Naive thymus-derived CD4-positive, alpha-beta T cell (primary cell): ENCODE measurements at regions of chr14 and their contacts with region 1.

Region 1: GRCh38 chr14:92328648-92329255 is 5.8 kb downstream of the SLC24A4 start:
- DNase-seq: no peak
- ATAC-seq: no peak
- H3K4me3 ChIP-seq: no peak overlapping the region
- H3K4me3 Mint-ChIP-seq: no peak overlapping the region
- H3K27ac ChIP-seq: no peak overlapping the region
- H3K27ac Mint-ChIP-seq: no peak overlapping the region
- H3K4me1 ChIP-seq: no peaks in the 10 kb centered on the region
- H3K4me1 Mint-ChIP-seq: no peaks in the 10 kb centered on the region
- H3K27me3 ChIP-seq: no peaks in the 10 kb centered on the region
- H3K27me3 Mint-ChIP-seq: peaks cover 19 to 42% (median 28%) of the 10 kb centered on the region in 5 donors

Region 2: DNA sequence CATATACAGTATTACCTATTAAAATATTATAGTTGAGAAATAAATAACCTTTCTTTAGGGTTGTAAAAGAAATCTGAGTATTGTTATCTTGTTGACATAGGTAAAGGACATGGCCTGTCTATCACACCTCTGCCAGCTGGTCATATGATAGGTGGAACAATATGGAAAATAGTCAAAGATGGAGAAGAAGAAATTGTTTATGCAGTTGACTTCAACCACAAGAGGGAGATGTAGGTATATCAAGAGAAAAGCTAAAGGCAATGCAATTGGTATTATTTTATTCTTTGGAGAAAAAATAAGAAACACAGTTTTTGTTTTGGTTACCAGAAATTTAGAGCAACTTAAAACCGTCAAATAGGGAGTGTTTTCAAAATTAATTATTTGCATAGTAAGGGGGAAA is 193.5 kb before region 1 on chr14:
- CTCF ChIA-PET with region 1: no interaction called
- POLR2A ChIA-PET with region 1: no interaction called
- intact Hi-C with region 1: loop called in 1 of 2 experiments (anchors 2 kb)
- DNase-seq: peak in 5 of 9 donors; percentile 10 to 37 (median 27)
- ATAC-seq: no peak
- H3K4me3 ChIP-seq: no peak overlapping the region
- H3K4me3 Mint-ChIP-seq: no peak overlapping the region
- H3K27ac ChIP-seq: no peak overlapping the region
- H3K27ac Mint-ChIP-seq: no peak overlapping the region
- H3K4me1 ChIP-seq: no peaks in the 10 kb centered on the region
- H3K4me1 Mint-ChIP-seq: peaks cover 5 to 19% (median 14%) of the 10 kb centered on the region in 7 donors
- H3K27me3 ChIP-seq: no peaks in the 10 kb centered on the region
- H3K27me3 Mint-ChIP-seq: no peaks in the 10 kb centered on the region